Transverse colon (tissue), 4 donors: ENCODE measurements at regions of chr11 and their contacts with region 1.

Region 1: GRCh38 chr11:133988686-133989410 is 32.1 kb upstream of the IGSF9B start:
- DNase-seq: no peak
- H3K4me3 ChIP-seq: no peak overlapping the region
- H3K27ac ChIP-seq: no peak overlapping the region
- H3K4me1 ChIP-seq: no peaks in the 10 kb centered on the region
- H3K27me3 ChIP-seq: no peaks in the 10 kb centered on the region
- CTCF ChIP-seq: no peak
- EP300 ChIP-seq: no peak
- POLR2A ChIP-seq: no peak

Region 2: GRCh38 chr11:133285359-133285758 is 703.5 kb before region 1 on chr11:
- in situ Hi-C with region 1: no loop called
- intact Hi-C with region 1: loop called (anchors 10 kb)
- DNase-seq: no peak
- H3K4me3 ChIP-seq: no peak overlapping the region
- H3K27ac ChIP-seq: no peak overlapping the region
- H3K4me1 ChIP-seq: no peaks in the 10 kb centered on the region
- H3K27me3 ChIP-seq: no peaks in the 10 kb centered on the region
- CTCF ChIP-seq: no peak
- EP300 ChIP-seq: no peak
- POLR2A ChIP-seq: no peak

Region 3: DNA sequence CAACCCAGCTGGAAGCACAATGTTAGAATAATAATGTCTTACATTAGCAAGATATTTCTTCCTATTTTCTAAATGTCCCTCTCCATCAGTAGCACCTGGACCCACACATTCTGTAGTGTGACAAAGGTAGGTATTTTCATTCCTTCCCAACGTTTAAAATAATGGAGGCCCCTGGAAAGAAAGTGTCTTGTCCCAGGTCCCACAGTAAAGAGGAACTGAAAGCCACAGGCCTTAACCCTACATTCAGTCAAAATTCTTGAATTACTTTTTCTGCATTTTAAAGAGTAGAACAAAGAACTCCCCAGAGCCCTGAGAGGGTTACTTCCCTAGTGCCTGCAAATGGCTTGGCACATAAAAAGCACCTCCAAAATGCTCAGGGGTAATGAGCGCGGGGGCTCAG is 482.8 kb before region 1 on chr11:
- in situ Hi-C with region 1: no loop called
- intact Hi-C with region 1: no loop called
- DNase-seq: no peak
- H3K4me3 ChIP-seq: no peak overlapping the region
- H3K27ac ChIP-seq: no peak overlapping the region
- H3K4me1 ChIP-seq: no peaks in the 10 kb centered on the region
- H3K27me3 ChIP-seq: no peaks in the 10 kb centered on the region
- CTCF ChIP-seq: no peak
- EP300 ChIP-seq: no peak
- POLR2A ChIP-seq: no peak